Right cardiac atrium (tissue), 5 donors: ENCODE measurements at regions of chr14 and their contacts with region 1.

Region 1: GRCh38 chr14:61489932-61490331 is 168.6 kb downstream of the PRKCH start:
- DNase-seq: peak; percentile 61 to 76 (median 67)
- ATAC-seq: peak; percentile 21 to 33
- H3K4me3 ChIP-seq: no peak overlapping the region
- H3K27ac ChIP-seq: peak overlapping the region; percentile 34
- H3K4me1 ChIP-seq: peaks cover 20% of the 10 kb centered on the region
- H3K27me3 ChIP-seq: no peaks in the 10 kb centered on the region

Region 2: GRCh38 chr14:61368114-61368726 is 121.7 kb before region 1 on chr14:
- intact Hi-C with region 1: no loop called
- DNase-seq: no peak
- ATAC-seq: peak; percentile 25 to 42
- H3K4me3 ChIP-seq: no peak overlapping the region
- H3K27ac ChIP-seq: no peak overlapping the region
- H3K4me1 ChIP-seq: peaks cover 7% of the 10 kb centered on the region
- H3K27me3 ChIP-seq: no peaks in the 10 kb centered on the region

Region 3: DNA sequence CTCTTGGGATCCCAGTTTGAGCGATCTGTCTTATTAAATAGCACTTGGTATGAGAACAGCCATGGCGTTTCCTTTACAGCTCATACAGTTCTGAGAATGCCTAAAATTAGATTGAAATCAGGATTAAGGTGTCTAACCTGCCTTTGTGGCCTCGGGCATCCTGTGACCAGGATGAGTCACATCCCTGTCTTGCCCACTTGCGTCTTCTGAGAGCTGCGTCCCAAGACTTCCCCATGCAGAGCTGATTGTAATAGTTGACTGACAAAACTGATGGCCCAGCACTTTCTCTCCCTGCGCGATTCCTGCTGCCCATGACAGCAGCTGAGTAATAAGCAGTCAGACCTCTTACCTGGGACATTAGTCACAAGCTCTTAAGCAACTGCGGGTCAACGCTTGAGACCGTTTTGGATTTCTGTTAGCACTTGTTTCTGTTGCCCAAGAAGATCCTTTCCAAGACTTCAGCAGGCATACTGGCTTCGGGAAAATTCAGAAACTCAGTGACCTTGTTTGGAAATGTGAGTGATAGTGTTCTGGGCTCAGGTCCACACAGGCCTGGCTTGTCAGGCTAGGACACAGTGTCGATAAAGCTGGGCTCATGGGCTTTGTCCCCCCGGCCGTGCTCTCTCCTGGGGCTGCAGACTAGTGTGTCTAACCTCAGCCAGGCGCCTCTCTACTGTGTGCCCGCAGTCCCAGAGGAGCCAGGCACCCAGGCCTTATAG is 35.5 kb after region 1 on chr14:
- intact Hi-C with region 1: loop called in 1 of 4 experiments (anchors 5 kb)
- DNase-seq: peak; percentile 69 to 89 (median 84)
- ATAC-seq: peak; percentile 78 to 90
- H3K4me3 ChIP-seq: no peak overlapping the region
- H3K27ac ChIP-seq: peak overlapping the region; percentile 98
- H3K4me1 ChIP-seq: peaks cover 23% of the 10 kb centered on the region
- H3K27me3 ChIP-seq: no peaks in the 10 kb centered on the region

Region 4: DNA sequence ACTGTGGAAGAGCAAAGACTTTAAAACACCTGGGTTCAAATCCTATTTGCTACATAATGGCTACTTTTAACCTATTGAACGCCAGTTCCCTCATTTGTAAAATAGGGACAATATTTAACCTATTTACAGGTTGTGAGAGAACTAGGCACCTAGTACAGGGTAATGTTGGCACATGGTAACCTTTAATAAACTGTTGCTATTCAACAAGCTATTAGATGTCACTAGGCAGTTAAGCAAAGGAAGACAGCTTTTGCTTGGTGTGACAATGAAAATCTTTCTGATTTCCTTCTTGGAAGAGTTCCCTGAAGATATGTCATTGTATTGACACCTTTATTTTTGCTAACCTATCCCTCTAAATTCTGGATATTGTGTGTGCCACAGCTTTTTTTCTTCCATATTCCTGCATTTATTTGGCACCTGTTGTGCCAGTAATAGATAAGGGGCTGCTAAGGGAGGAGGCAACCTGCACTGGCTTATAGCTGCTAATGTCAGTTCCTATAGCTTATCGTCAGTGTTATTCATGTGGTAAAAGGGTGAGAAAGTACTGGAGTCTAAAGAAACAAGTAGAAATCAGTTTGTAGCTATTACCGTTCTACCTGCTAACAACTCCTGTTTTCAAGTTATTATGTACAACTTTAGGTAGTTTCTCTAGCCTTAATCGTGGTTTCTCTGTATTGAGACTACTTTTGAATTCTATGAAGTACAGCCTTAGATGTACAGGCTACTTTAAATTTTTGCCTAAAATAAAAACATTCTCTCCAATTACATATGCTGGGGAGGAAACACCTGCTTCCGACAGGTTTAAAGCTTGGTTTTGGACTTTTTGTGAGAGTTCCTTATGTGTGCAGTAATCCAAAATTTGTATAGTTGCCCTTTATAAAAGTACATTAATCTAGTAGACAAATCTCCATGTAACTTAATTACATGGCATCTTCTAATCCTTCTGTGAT is 229.7 kb after region 1 on chr14:
- intact Hi-C with region 1: no loop called
- DNase-seq: no peak
- ATAC-seq: peak in 1 of 2 donors; percentile 26
- H3K4me3 ChIP-seq: no peak overlapping the region
- H3K27ac ChIP-seq: no peak overlapping the region
- H3K4me1 ChIP-seq: peaks cover 4% of the 10 kb centered on the region
- H3K27me3 ChIP-seq: no peaks in the 10 kb centered on the region